ENCODE measurements at regions of chr6 and their contacts with region 1.

Region 1: GRCh38 chr6:150334790-150335783 is 33.7 kb upstream of the IYD start:
- DNase-seq: peak in 1 of 2 donors; percentile 51
- ATAC-seq: peak in 3 of 8 donors; percentile 33 to 59 (median 37)
- H3K4me3 ChIP-seq: no peak overlapping the region
- H3K27ac ChIP-seq: no peak overlapping the region
- H3K4me1 ChIP-seq: no peaks in the 10 kb centered on the region
- H3K27me3 ChIP-seq: peaks cover 0 to 4% (median 0%) of the 10 kb centered on the region in 7 donors
- CTCF ChIP-seq: peak; percentile 57 to 91 (median 86)

Region 2: DNA sequence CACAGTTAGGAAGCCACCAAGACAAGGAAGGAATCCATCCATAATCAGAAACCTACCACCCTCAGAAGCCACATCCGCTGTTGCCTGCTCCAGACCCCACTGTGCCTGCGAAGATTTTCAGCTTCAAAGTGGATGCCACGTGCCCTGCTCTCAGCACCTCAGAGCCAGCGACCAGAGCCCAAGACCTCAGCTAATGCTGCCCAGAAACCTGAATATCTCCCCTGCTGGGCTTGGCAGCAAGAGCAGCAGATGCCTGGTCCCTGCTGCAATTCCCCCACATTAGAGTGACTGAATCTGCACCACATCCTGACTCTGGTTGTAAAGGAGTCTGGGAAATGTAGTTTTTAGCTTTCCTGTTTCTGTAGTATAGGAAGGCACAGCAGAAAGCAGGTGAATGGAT is 255.5 kb before region 1 on chr6:
- intact Hi-C with region 1: loop called (anchors 1 to 5 kb)
- DNase-seq: no peak
- ATAC-seq: no peak
- H3K4me3 ChIP-seq: no peak overlapping the region
- H3K27ac ChIP-seq: no peak overlapping the region
- H3K4me1 ChIP-seq: no peaks in the 10 kb centered on the region
- H3K27me3 ChIP-seq: peaks cover 0 to 35% (median 0%) of the 10 kb centered on the region in 7 donors
- CTCF ChIP-seq: no peak